ENCODE measurements at regions of chr20 and their contacts with region 1.

Region 1: DNA sequence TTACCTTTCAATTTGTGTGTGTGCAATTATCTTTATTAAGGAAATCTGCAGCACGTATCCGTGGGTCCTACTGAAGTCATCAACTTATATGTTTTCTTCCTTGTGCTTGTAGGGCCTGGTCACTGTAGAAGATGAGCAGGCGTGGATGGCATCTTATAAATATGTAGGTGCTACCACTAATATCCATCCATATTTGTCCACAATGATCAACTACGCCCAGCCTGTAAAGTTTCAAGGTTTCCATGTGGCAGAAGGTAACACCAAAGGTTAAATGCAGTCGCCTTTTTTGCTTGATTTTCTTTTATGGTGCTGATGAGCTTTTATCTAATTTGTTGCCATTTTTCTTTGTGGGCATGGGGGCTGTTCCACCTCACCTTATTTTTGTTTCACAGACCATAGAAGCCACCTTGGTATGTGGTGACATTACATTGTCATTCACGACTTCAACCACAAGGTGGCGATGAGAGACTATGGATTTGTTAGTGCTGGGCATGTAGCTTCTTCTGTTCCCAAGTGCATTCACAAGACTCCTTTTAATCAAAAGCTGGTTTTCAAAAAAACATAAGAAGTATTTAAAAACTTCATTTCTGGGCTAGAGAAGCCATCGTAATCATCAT is 106.5 kb upstream of the LAMP5 start:
- DNase-seq: peak; percentile 60
- H3K4me3 ChIP-seq: no peak overlapping the region
- H3K27ac ChIP-seq: no peak overlapping the region
- H3K27me3 ChIP-seq: no peaks in the 10 kb centered on the region
- CTCF ChIP-seq: peak; percentile 85

Region 2: GRCh38 chr20:9375221-9375681 is 32.7 kb before region 1 on chr20:
- CTCF ChIA-PET with region 1: interaction called, 17 read pairs
- POLR2A ChIA-PET with region 1: no interaction called
- DNase-seq: peak; percentile 27
- H3K4me3 ChIP-seq: no peak overlapping the region
- H3K27ac ChIP-seq: peak overlapping the region; percentile 74
- H3K27me3 ChIP-seq: no peaks in the 10 kb centered on the region
- CTCF ChIP-seq: no peak

Region 3: DNA sequence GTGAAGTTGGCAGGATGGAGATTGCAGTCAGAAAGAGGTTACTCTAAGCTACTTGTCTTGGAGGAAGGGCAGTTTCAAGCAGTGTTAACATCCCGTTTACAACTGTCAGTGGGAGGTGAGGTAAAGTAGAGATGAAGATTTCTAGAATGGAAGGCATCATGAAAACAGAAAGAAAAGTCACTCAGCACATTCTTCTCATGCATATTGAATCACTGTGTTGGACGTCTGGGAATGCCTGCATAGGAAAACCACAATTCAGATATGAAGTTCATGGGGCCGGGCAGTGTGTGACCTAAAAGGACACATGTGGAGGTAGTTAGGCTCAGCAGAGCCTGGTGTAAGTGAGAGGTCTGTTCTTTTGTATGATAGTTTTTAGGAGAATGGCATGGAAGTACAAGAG is 33.0 kb after region 1 on chr20:
- CTCF ChIA-PET with region 1: interaction called, 15 read pairs
- POLR2A ChIA-PET with region 1: no interaction called
- DNase-seq: no peak
- H3K4me3 ChIP-seq: no peak overlapping the region
- H3K27ac ChIP-seq: no peak overlapping the region
- H3K27me3 ChIP-seq: no peaks in the 10 kb centered on the region
- CTCF ChIP-seq: no peak

Region 4: DNA sequence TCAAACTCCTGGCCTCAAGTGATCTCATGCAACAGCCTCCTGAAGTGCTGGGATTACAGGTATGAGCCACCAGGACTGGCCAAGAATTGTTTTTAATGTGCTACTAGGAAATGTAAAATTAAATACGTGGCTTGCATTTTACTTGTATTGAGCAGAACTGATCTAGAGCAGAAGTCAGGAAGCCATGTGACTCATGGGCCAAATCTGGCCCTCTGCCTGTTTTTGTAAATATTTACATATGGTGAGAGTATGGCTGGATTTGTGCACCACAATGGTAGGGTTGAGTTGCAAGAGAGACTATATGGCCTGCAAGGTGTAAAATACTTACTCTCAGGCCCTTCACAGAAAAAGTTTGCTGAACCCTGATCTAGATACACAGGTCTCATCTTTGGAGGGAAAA is 182.3 kb after region 1 on chr20:
- CTCF ChIA-PET with region 1: interaction called, 18 read pairs
- POLR2A ChIA-PET with region 1: no interaction called
- DNase-seq: peak; percentile 55
- H3K4me3 ChIP-seq: no peak overlapping the region
- H3K27ac ChIP-seq: no peak overlapping the region
- H3K27me3 ChIP-seq: no peaks in the 10 kb centered on the region
- CTCF ChIP-seq: no peak

Region 5: DNA sequence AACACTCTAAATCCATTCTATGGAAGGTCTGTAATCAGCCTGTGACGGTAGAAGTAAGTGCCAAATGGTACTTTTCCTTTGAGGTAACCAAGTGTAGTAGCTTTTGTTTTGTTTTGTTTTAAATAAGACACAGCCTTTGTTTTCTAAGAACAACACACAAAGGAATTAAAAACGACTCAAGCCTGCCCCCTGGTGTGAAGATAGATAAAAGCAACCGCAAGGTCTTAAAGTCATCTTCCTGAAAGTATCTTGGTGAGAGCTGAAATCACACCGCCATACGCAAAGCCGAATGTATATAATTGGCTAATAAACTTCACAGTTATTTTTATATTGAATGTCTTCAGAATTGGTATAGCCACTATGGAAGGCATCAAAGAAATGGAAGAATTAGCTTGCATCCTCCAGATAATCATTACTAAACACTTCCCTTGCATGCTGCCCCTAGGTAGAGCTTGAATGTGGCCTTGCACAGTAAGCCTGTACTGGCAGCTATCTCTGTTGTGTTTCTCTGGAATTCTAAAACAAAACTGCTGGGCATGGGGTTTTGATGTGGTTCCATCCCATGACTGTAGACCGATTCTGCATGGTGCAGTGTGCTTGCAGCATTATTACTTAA is 202.1 kb after region 1 on chr20:
- CTCF ChIA-PET with region 1: interaction called, 606 read pairs
- POLR2A ChIA-PET with region 1: interaction called, 3 read pairs
- DNase-seq: peak; percentile 36
- H3K4me3 ChIP-seq: no peak overlapping the region
- H3K27ac ChIP-seq: no peak overlapping the region
- H3K27me3 ChIP-seq: peaks cover 8% of the 10 kb centered on the region
- CTCF ChIP-seq: peak; percentile 70

Measured in AG04450 (cell line).